Activated CD4-positive, alpha-beta T cell treated with anti-CD3 and anti-CD28 coated beads, Interleukin-2, amount 10 ng/mL, durations not matched to agents 24 days and 14 days (primary cell): ENCODE measurements at regions of chr14 and their contacts with region 1.

Region 1: DNA sequence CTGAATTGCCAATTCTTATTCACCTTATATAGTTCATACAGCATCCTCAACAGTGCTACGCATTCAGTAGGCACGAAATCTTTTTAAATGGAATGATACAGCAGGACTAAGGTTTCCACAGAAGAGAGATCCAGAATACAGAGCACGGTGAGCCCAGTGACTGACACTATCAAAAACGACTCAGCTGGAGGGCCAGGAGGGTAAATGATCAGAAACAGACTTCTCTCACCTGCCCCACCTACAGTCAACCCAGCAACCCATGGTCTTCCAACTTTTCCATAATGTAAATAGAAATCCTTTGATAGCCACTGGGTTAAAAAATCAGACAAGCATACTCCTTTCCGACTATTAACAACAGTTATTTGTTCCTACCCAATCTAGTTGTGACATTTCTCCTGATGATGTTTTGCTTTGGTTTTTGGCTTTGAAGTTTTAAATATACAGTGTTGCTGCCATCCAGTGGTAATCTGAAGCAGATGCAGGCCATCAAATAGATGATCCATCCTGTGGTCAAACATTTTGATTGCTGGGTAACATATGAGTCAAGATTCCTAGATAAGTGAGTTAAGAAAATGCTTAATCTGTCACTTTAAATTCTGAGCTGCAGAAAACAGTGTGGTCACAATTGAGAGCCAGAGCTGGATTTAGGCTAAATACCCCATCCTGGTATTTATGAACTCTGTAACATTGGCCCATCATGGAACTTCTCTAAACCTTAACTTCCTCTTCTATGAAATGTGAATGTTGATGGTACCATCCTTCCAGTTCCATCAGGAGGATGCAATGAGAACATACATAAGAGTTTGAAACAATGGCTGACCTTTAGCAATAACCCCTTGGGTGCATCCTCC is 42.0 kb downstream of the GPHB5 start:
- DNase-seq: no peak
- H3K4me3 Mint-ChIP-seq: no peak overlapping the region
- H3K27ac Mint-ChIP-seq: no peak overlapping the region
- H3K4me1 Mint-ChIP-seq: no peaks in the 10 kb centered on the region
- H3K27me3 Mint-ChIP-seq: peaks cover 6% of the 10 kb centered on the region

Region 2: DNA sequence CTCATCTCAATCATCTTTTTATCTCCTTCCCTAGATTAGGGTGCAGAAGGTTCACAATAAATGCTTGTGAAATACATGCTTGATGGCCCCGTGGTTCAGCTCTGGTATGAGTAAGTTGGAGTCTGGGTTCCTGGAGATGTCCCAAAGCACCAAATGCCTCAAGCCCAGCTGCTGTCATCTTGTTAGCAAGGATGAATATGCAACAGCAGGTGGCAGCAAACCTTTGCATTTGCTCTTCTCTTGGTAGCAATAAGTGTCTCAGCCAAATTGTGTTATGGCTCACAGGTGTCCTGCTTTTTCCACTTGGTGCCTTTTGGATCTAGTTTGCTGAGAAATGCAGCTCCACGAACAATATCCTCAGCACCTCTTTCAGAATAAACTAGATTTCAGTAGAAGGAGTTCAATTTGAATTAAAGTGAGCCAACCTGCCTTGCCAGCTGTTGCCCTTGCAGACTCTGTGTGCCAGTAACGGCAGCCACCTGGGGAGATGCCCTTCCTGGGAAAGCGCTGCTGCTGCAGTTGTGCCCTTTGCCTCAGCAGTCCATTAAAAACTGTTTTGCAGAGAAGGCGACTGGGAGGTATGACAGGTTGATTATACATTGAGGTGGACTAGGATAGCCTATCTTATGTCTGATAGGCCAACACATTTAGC is 1097.2 kb before region 1 on chr14:
- intact Hi-C with region 1: loop called (anchors 5 kb)
- DNase-seq: peak; percentile 72
- H3K4me3 Mint-ChIP-seq: no peak overlapping the region
- H3K27ac Mint-ChIP-seq: no peak overlapping the region
- H3K4me1 Mint-ChIP-seq: no peaks in the 10 kb centered on the region
- H3K27me3 Mint-ChIP-seq: peaks cover 8% of the 10 kb centered on the region